ENCODE measurements at regions of chrX and their contacts with region 1.

Region 1: GRCh38 chrX:153554519-153555167 is 37.2 kb downstream of the ATP2B3 start:
- DNase-seq: peak; percentile 70 to 88 (median 78)
- H3K4me3 ChIP-seq: no peak overlapping the region
- H3K27ac ChIP-seq: no peak overlapping the region
- H3K4me1 ChIP-seq: no peaks in the 10 kb centered on the region
- H3K27me3 ChIP-seq: peaks cover 10% of the 10 kb centered on the region
- CTCF ChIP-seq: peak; percentile 42 to 72 (median 62)
- POLR2A ChIP-seq: no peak

Region 2: DNA sequence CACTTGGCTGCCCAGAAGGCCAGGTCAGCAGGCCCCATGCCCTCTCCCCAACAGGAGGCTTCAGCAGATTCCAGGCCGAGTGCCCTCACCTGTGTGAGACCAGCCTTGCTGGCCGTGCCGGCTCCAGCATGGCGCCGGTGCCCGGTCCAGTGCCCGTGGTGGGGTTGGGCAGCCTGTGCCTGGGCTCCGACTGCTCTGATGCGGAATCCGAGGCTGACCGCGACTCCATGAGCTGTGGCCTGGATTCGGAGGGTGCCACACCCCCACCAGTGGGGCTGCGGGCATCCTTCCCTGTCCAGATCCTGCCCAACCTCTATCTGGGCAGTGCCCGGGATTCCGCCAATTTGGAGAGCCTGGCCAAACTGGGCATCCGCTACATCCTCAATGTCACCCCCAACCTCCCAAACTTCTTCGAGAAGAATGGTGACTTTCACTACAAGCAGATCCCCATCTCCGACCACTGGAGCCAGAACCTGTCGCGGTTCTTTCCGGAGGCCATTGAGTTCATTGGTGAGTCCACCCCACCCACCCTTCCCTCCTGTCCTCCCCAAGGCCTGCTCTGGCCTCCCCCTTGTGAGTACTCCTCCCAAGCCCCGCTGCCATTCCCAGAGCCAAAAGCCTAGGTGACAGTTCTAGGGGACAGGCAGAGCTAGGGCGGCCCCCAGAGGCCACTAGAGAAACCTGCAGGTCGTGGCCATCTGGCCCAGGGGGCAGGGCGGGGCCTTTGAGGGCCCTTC is 94.7 kb after region 1 on chrX:
- intact Hi-C with region 1: loop called in 1 of 2 experiments (anchors 10 kb)
- DNase-seq: peak; percentile 23 to 56 (median 50)
- H3K4me3 ChIP-seq: no peak overlapping the region
- H3K27ac ChIP-seq: no peak overlapping the region
- H3K4me1 ChIP-seq: no peaks in the 10 kb centered on the region
- H3K27me3 ChIP-seq: peaks cover 50% of the 10 kb centered on the region
- CTCF ChIP-seq: peak; percentile 20 to 52 (median 36)
- POLR2A ChIP-seq: no peak

Region 3: GRCh38 chrX:153672531-153673427 is 118.1 kb after region 1 on chrX:
- intact Hi-C with region 1: loop called in 1 of 2 experiments (anchors 5 kb)
- DNase-seq: peak in 2 of 7 donors; percentile 9 to 14
- H3K4me3 ChIP-seq: no peak overlapping the region
- H3K27ac ChIP-seq: no peak overlapping the region
- H3K4me1 ChIP-seq: no peaks in the 10 kb centered on the region
- H3K27me3 ChIP-seq: peaks cover 24% of the 10 kb centered on the region
- CTCF ChIP-seq: no peak
- POLR2A ChIP-seq: no peak